CD4-positive, alpha-beta memory T cell (primary cell): ENCODE measurements at regions of chrX and their contacts with region 1.

Region 1: GRCh38 chrX:49878834-49879659 is at the start of gene USP27X:
- DNase-seq: peak; percentile 78 to 87 (median 81)
- H3K4me3 ChIP-seq: peak within 1 kb of the TSS in 1 of 2 donors; percentile 55
- H3K4me3 Mint-ChIP-seq: peak within 1 kb of the TSS; percentile 78 to 88 (median 84)
- H3K27ac ChIP-seq: peak within 1 kb of the TSS; percentile 60
- H3K27ac Mint-ChIP-seq: peak within 1 kb of the TSS; percentile 82 to 91 (median 86)
- H3K4me1 ChIP-seq: peaks cover 17% of the 10 kb centered on the region
- H3K4me1 Mint-ChIP-seq: peaks cover 12 to 46% (median 23%) of the 10 kb centered on the region in 4 donors
- H3K27me3 ChIP-seq: no peaks in the 10 kb centered on the region
- H3K27me3 Mint-ChIP-seq: peaks cover 0 to 2% of the 10 kb centered on the region in 2 donors
- total RNA-seq, gene USP27X: 7.3 to 7.5 TPM

Region 2: DNA sequence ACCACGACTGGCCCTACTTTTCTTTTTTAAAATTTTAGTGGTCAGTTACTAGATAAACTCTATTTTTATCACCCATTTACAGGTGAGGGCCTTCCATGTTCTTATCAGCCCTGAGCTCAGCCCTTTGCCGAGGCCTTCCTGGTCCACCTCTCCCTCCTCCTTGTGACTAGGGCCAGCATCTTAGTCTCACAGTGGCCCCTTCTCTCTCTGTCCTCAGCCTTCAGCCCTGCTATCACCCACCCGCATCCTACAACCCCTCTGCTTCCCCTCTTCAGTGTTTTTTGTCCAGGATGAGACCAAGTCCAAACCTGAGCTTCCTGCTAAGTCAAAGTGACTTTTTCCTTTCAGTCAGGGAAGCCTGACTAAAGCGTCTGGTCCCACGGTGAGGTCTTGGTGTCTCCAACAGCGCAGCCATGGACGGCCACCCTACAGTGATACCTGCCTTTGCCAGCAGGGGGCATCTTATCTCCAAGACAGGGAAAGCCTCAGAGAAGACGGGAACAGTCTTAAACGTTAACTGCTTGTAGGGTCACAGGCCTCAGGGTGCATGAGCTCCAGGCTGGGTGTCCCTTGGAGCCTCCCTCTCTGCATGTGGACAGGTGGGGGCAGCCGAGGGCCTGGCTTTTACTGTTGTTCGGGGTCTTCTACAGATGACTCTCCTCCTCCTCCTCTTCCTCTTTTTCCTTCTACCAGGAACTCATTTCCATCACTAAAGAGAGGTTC is 587.3 kb before region 1 on chrX:
- CTCF ChIA-PET with region 1: no interaction called
- POLR2A ChIA-PET with region 1: no interaction called
- intact Hi-C with region 1: loop called (anchors 2 kb)
- DNase-seq: peak; percentile 56 to 64 (median 59)
- H3K4me3 ChIP-seq: no peak overlapping the region
- H3K4me3 Mint-ChIP-seq: peak overlapping the region in 5 of 8 donors; percentile 1 to 84 (median 57)
- H3K27ac ChIP-seq: no peak overlapping the region
- H3K27ac Mint-ChIP-seq: peak overlapping the region in 6 of 7 donors; percentile 10 to 91 (median 74)
- H3K4me1 ChIP-seq: peaks cover 34% of the 10 kb centered on the region
- H3K4me1 Mint-ChIP-seq: peaks cover 22 to 42% (median 29%) of the 10 kb centered on the region in 4 donors
- H3K27me3 ChIP-seq: no peaks in the 10 kb centered on the region
- H3K27me3 Mint-ChIP-seq: no peaks in the 10 kb centered on the region

Region 3: GRCh38 chrX:49644991-49645637 is 233.9 kb before region 1 on chrX:
- CTCF ChIA-PET with region 1: no interaction called
- POLR2A ChIA-PET with region 1: no interaction called
- intact Hi-C with region 1: no loop called
- DNase-seq: no peak
- H3K4me3 ChIP-seq: no peak overlapping the region
- H3K4me3 Mint-ChIP-seq: no peak overlapping the region
- H3K27ac ChIP-seq: no peak overlapping the region
- H3K27ac Mint-ChIP-seq: no peak overlapping the region
- H3K4me1 ChIP-seq: no peaks in the 10 kb centered on the region
- H3K4me1 Mint-ChIP-seq: no peaks in the 10 kb centered on the region
- H3K27me3 ChIP-seq: no peaks in the 10 kb centered on the region
- H3K27me3 Mint-ChIP-seq: no peaks in the 10 kb centered on the region

Region 4: DNA sequence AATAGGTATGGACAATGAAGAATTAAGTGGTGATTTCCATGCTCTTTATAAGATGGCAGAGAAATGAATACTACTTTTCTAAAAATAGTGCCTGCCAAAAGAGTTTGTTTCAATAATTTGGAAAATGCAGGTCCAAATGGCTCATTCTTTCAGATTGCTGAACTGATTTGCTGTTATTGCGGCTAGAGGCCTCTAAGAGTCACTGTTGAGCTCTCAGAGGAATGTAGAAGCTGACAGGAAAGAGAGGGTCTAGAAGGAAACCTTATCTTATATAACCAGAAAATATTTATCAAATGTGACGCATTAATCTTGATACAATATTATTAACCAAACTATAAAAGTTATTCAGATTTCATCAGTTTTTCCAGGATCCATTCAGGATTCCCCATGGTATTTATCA is 117.6 kb before region 1 on chrX:
- CTCF ChIA-PET with region 1: interaction called, 4 read pairs
- POLR2A ChIA-PET with region 1: no interaction called
- intact Hi-C with region 1: loop called (anchors 5 kb)
- DNase-seq: peak in 4 of 5 donors; percentile 4 to 18 (median 14)
- H3K4me3 ChIP-seq: no peak overlapping the region
- H3K4me3 Mint-ChIP-seq: no peak overlapping the region
- H3K27ac ChIP-seq: no peak overlapping the region
- H3K27ac Mint-ChIP-seq: no peak overlapping the region
- H3K4me1 ChIP-seq: no peaks in the 10 kb centered on the region
- H3K4me1 Mint-ChIP-seq: peaks cover 0 to 2% (median 0%) of the 10 kb centered on the region in 4 donors
- H3K27me3 ChIP-seq: no peaks in the 10 kb centered on the region
- H3K27me3 Mint-ChIP-seq: peaks cover 0 to 2% of the 10 kb centered on the region in 2 donors

Region 5: GRCh38 chrX:49922291-49923241 is 43.5 kb after region 1 on chrX and contains the start of gene CLCN5:
- CTCF ChIA-PET with region 1: interaction called, 28 read pairs
- POLR2A ChIA-PET with region 1: interaction called, 9 read pairs
- intact Hi-C with region 1: loop called (anchors 1 kb)
- DNase-seq: peak; percentile 91 to 96 (median 95)
- H3K4me3 ChIP-seq: peak within 1 kb of the TSS; percentile 42 to 65
- H3K4me3 Mint-ChIP-seq: peak within 1 kb of the TSS; percentile 76 to 86 (median 80)
- H3K27ac ChIP-seq: peak within 1 kb of the TSS; percentile 32
- H3K27ac Mint-ChIP-seq: peak within 1 kb of the TSS; percentile 59 to 81 (median 70)
- H3K4me1 ChIP-seq: peaks cover 4% of the 10 kb centered on the region
- H3K4me1 Mint-ChIP-seq: peaks cover 5 to 12% (median 5%) of the 10 kb centered on the region in 4 donors
- H3K27me3 ChIP-seq: no peaks in the 10 kb centered on the region
- H3K27me3 Mint-ChIP-seq: no peaks in the 10 kb centered on the region
- total RNA-seq, gene CLCN5: 1.8 to 2.4 TPM

Region 6: GRCh38 chrX:49934148-49934547 is 55.1 kb after region 1 on chrX:
- CTCF ChIA-PET with region 1: no interaction called
- POLR2A ChIA-PET with region 1: no interaction called
- intact Hi-C with region 1: no loop called
- DNase-seq: no peak
- H3K4me3 ChIP-seq: no peak overlapping the region
- H3K4me3 Mint-ChIP-seq: no peak overlapping the region
- H3K27ac ChIP-seq: no peak overlapping the region
- H3K27ac Mint-ChIP-seq: no peak overlapping the region
- H3K4me1 ChIP-seq: no peaks in the 10 kb centered on the region
- H3K4me1 Mint-ChIP-seq: no peaks in the 10 kb centered on the region
- H3K27me3 ChIP-seq: no peaks in the 10 kb centered on the region
- H3K27me3 Mint-ChIP-seq: no peaks in the 10 kb centered on the region

Region 7: DNA sequence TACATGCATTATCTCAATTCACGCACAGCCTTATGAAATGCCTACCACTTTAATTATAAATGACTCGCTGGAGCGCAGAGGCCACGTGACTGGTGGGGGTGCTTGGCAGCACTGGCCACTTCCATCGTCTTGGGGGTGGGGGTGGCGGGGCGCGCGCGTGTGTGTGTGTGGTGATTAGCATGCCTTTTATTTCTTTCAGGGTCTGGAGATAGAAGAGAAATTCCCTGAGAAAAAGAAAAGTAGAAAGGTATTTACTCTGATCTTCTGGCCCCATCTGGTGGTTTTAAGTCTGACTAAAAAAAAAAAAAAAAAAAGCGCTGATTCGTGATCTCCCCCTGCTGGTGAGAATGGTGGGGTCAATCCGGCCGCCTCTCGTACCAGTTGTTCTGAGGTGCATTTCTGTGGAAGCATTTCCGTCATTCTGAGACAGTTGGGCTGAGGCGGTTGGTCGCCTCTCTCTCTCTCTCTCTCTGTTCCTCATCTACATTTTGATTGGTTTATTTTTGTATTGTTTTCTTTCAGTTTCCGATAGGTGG is 325.4 kb after region 1 on chrX and contains the start of gene CCNB3:
- CTCF ChIA-PET with region 1: interaction called, 3 read pairs
- POLR2A ChIA-PET with region 1: no interaction called
- intact Hi-C with region 1: loop called (anchors 1 kb)
- DNase-seq: peak; percentile 73 to 84 (median 82)
- H3K4me3 ChIP-seq: peak within 1 kb of the TSS in 1 of 2 donors; percentile 24
- H3K4me3 Mint-ChIP-seq: peak within 1 kb of the TSS; percentile 71 to 92 (median 84)
- H3K27ac ChIP-seq: peak within 1 kb of the TSS; percentile 21
- H3K27ac Mint-ChIP-seq: peak within 1 kb of the TSS; percentile 71 to 96 (median 85)
- H3K4me1 ChIP-seq: peaks cover 6% of the 10 kb centered on the region
- H3K4me1 Mint-ChIP-seq: peaks cover 5 to 20% (median 9%) of the 10 kb centered on the region in 4 donors
- H3K27me3 ChIP-seq: no peaks in the 10 kb centered on the region
- H3K27me3 Mint-ChIP-seq: no peaks in the 10 kb centered on the region
- total RNA-seq, gene CCNB3: 0.09 to 0.17 TPM